GM12878 (cell line): ENCODE measurements at regions of chr6 and their contacts with region 1.

Region 1: DNA sequence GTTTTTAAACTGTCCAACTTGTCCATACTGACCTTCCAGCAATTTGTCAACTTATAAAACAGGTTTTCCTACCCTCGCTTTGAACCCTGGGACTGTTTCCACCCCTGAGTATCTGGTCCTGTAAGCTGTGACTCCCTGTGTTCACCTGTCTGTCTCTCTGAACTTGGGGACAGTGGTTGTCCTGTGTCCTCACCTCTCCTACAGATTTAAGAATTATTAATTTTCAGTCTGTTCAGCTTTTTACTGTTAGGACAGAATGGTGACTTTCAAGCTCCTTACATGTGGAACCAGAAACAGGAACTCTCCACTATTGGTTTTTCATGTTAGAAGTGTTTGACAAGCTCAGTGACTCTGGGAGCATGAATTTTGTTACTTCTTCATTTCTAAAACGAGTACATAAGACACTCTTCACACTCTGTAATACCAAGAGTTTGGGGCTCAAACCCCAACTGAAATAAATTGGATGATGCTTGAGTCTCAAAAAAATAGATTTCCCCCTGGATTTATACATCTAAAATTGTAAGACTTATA is 713.9 kb downstream of the COL12A1 start:
- DNase-seq: no peak
- ATAC-seq: peak; percentile 94
- H3K4me3 ChIP-seq: no peak overlapping the region
- H3K27ac ChIP-seq: no peak overlapping the region
- H3K4me1 ChIP-seq: no peaks in the 10 kb centered on the region
- H3K27me3 ChIP-seq: no peaks in the 10 kb centered on the region
- CTCF ChIP-seq: no peak
- EP300 ChIP-seq: no peak
- POLR2A ChIP-seq: no peak
- RAD21 ChIP-seq: no peak

Region 2: GRCh38 chr6:73710470-73710869 is 781.4 kb before region 1 on chr6:
- CTCF ChIA-PET with region 1: no interaction called
- POLR2A ChIA-PET with region 1: no interaction called
- RAD21 ChIA-PET with region 1: no interaction called
- SMC1A ChIA-PET with region 1: no interaction called
- in situ Hi-C with region 1: no loop called
- intact Hi-C with region 1: no loop called
- DNase-seq: no peak
- ATAC-seq: no peak
- H3K4me3 ChIP-seq: no peak overlapping the region
- H3K27ac ChIP-seq: no peak overlapping the region
- H3K4me1 ChIP-seq: no peaks in the 10 kb centered on the region
- H3K27me3 ChIP-seq: no peaks in the 10 kb centered on the region; a peak in 1 of 4 replicates
- CTCF ChIP-seq: no peak
- EP300 ChIP-seq: no peak
- POLR2A ChIP-seq: no peak
- RAD21 ChIP-seq: no peak

Region 3: GRCh38 chr6:74259981-74260380 is 231.9 kb before region 1 on chr6:
- CTCF ChIA-PET with region 1: no interaction called
- POLR2A ChIA-PET with region 1: no interaction called
- RAD21 ChIA-PET with region 1: no interaction called
- SMC1A ChIA-PET with region 1: no interaction called
- in situ Hi-C with region 1: no loop called
- intact Hi-C with region 1: no loop called
- DNase-seq: no peak
- ATAC-seq: no peak
- H3K4me3 ChIP-seq: no peak overlapping the region
- H3K27ac ChIP-seq: no peak overlapping the region
- H3K4me1 ChIP-seq: no peaks in the 10 kb centered on the region
- H3K27me3 ChIP-seq: no peaks in the 10 kb centered on the region
- CTCF ChIP-seq: no peak
- EP300 ChIP-seq: no peak
- POLR2A ChIP-seq: no peak
- RAD21 ChIP-seq: no peak

Region 4: DNA sequence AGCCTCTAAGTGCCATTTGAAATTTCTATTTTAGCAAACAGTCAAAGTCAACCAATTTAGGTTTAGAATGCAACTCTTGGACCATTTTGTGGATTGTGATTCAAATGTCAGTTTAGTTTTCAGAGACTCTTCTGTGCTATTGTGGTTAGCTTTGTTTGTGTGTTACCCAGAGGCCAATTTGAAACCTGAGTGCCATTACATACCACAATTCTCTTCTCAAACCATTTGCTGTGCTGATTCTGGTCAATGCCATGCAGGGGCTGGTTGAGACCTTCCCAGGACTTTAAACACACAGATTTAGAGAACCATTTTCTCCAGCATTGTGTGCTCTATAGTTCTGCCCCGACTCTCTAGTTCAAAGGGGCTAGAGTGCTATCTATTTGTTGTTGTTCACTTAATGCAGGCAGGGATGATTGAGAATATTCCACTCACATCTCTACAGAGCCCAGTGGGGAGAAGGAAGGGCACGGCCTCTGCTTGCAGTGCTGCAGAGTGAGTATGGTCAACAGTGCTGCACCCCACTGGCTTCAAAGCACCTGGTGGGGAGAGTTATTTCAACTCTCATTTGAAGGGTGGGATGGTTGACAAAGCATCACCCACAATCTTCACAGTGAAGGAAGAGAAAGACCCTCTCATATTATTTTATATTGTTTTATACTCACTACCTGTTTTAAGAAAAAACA is 24.2 kb before region 1 on chr6:
- CTCF ChIA-PET with region 1: no interaction called
- POLR2A ChIA-PET with region 1: interaction called, 3 read pairs
- RAD21 ChIA-PET with region 1: interaction called, 4 read pairs
- SMC1A ChIA-PET with region 1: interaction called, 11 read pairs
- in situ Hi-C with region 1: no loop called
- intact Hi-C with region 1: no loop called
- DNase-seq: no peak
- ATAC-seq: peak; percentile 68
- H3K4me3 ChIP-seq: no peak overlapping the region
- H3K27ac ChIP-seq: no peak overlapping the region
- H3K4me1 ChIP-seq: no peaks in the 10 kb centered on the region
- H3K27me3 ChIP-seq: no peaks in the 10 kb centered on the region
- CTCF ChIP-seq: no peak
- EP300 ChIP-seq: no peak
- POLR2A ChIP-seq: no peak
- RAD21 ChIP-seq: no peak

Region 5: DNA sequence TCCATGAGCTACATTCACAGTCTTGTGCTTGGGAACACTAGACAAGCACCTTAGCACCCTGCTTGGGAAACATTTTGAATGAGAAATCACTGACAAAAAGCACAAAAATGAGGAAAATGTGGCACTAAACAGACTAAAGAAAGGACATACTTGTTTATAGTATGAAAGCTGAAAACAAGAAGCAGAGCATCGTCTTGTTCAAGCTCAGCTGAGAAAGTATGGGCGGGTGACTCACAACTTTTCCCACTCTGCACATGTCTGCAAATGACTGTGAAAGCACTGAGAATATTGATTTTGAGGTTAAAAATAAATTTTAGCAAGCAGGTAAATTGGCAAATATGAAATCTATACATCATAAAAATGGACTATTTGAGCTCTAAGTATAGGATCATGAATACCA is 11.3 kb before region 1 on chr6:
- CTCF ChIA-PET with region 1: interaction called, 5 read pairs
- POLR2A ChIA-PET with region 1: interaction called, 5 read pairs
- RAD21 ChIA-PET with region 1: interaction called, 15 read pairs
- SMC1A ChIA-PET with region 1: interaction called, 8 read pairs
- in situ Hi-C with region 1: no loop called
- intact Hi-C with region 1: no loop called
- DNase-seq: no peak
- ATAC-seq: peak; percentile 60
- H3K4me3 ChIP-seq: no peak overlapping the region
- H3K27ac ChIP-seq: no peak overlapping the region
- H3K4me1 ChIP-seq: no peaks in the 10 kb centered on the region
- H3K27me3 ChIP-seq: no peaks in the 10 kb centered on the region
- CTCF ChIP-seq: no peak
- EP300 ChIP-seq: no peak
- POLR2A ChIP-seq: no peak
- RAD21 ChIP-seq: no peak

Region 6: DNA sequence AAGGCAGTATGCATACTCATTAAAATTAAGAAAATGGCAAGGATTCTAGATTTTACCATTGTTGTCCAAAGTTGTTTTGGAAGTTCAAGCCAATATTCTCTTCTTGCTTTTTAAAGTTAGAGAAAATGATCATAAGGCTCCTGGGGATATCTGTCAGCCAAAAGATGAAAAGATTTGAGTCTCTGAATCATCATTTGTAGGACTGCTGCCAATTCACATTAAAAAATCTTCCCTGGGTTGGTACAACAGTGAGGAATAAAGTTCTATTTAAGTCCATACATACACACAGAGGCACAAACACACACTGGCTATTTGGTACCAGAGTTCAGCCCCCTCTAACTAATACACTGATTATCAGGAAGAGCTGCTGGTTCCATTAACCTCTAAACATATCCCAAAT is 93.9 kb after region 1 on chr6:
- CTCF ChIA-PET with region 1: no interaction called
- POLR2A ChIA-PET with region 1: no interaction called
- RAD21 ChIA-PET with region 1: no interaction called
- SMC1A ChIA-PET with region 1: no interaction called
- in situ Hi-C with region 1: no loop called
- intact Hi-C with region 1: no loop called
- DNase-seq: no peak
- ATAC-seq: no peak
- H3K4me3 ChIP-seq: no peak overlapping the region
- H3K27ac ChIP-seq: no peak overlapping the region
- H3K4me1 ChIP-seq: no peaks in the 10 kb centered on the region
- H3K27me3 ChIP-seq: no peaks in the 10 kb centered on the region
- CTCF ChIP-seq: no peak
- EP300 ChIP-seq: no peak
- POLR2A ChIP-seq: no peak
- RAD21 ChIP-seq: no peak

Region 7: GRCh38 chr6:74749211-74750142 is 257.6 kb after region 1 on chr6:
- CTCF ChIA-PET with region 1: no interaction called
- POLR2A ChIA-PET with region 1: no interaction called
- RAD21 ChIA-PET with region 1: no interaction called
- SMC1A ChIA-PET with region 1: no interaction called
- in situ Hi-C with region 1: no loop called
- intact Hi-C with region 1: no loop called
- DNase-seq: no peak
- ATAC-seq: peak; percentile 83
- H3K4me3 ChIP-seq: no peak overlapping the region
- H3K27ac ChIP-seq: no peak overlapping the region
- H3K4me1 ChIP-seq: no peaks in the 10 kb centered on the region
- H3K27me3 ChIP-seq: no peaks in the 10 kb centered on the region
- CTCF ChIP-seq: no peak
- EP300 ChIP-seq: no peak
- POLR2A ChIP-seq: no peak
- RAD21 ChIP-seq: no peak